AG04450 (cell line): ENCODE measurements at regions of chr1 and their contacts with region 1.

Region 1: DNA sequence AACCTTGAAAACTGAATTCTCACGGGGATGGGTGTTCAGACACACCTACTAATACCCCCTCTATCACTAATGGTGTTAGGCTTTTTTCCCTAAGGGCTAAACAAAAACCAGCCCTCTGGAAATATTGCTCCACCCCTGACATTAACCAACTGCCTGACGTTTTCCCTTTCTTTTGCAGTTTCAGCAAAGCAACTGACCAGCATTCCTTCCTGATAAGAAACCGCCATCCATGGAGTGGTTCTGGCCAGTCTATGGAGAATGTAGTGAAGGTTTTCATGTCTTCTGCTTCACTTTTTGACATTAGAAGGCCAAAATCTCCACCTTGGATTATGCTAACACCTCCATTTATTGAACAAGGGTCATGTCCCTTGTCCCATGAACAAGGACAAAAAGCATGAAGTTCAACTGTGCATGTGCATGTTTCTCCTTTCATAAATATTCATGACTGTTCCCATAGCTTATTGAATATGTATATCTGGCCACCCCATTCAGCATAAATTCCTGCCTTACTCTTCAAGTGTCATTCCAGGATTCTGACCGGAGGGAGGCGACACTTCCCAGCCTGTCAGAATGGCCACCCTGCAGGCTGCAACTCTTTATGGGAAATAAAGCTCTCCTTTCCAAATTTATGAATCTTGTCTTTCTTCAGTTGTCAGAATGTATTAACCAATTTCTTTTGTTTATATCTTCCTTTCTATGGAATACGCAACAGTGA is 314.3 kb downstream of the HHIPL2 start:
- DNase-seq: no peak
- H3K4me3 ChIP-seq: no peak overlapping the region
- H3K27ac ChIP-seq: no peak overlapping the region
- H3K27me3 ChIP-seq: no peaks in the 10 kb centered on the region
- CTCF ChIP-seq: no peak

Region 2: DNA sequence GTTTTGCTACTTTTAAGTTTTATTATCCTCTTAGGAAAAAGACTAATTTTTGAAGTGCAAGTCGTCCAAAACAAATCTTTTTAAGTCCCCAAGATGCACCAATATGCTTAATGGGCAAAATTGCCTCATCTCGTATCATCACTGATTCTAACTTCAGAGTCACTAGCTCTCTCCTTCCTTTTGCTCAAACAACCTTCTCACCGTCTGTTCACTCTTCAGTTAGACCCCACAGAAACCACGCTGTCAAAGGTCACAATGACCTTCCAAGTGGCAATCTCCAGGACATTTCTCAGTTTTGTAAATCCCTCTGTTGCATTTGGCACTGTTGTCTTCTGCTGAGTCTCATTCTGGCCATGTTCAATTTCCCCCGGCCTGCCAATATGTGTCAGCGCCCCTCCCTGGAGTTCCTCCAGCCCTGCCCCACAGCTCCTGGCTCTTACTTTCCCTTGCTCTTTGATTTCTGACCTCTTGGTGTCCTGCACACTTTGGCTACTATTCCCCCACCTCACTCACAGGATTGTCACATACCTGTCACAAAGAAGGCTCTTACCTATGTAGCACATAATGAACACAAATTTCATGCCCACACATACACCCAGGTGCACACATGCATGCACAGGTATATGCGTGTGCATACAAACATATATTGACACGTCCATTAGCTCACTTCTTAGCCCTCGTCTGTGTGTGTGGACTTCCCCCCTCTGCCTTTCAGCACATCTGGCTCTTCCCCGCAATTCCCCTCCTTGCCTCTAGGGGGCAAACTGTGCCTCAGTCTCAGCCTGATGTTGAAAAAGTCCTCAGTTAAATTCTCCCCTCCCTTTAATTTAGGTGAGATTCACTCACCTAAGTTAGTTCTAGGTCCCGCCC is 137.8 kb before region 1 on chr1:
- CTCF ChIA-PET with region 1: interaction called, 15 read pairs
- POLR2A ChIA-PET with region 1: no interaction called
- DNase-seq: no peak
- H3K4me3 ChIP-seq: no peak overlapping the region
- H3K27ac ChIP-seq: no peak overlapping the region
- H3K27me3 ChIP-seq: no peaks in the 10 kb centered on the region
- CTCF ChIP-seq: peak; percentile 65

Region 3: GRCh38 chr1:222195857-222196256 is 37.7 kb before region 1 on chr1:
- CTCF ChIA-PET with region 1: no interaction called
- POLR2A ChIA-PET with region 1: no interaction called
- DNase-seq: no peak
- H3K4me3 ChIP-seq: no peak overlapping the region
- H3K27ac ChIP-seq: no peak overlapping the region
- H3K27me3 ChIP-seq: no peaks in the 10 kb centered on the region
- CTCF ChIP-seq: no peak